ENCODE measurements at regions of chr1 and their contacts with region 1.

Region 1: GRCh38 chr1:108828022-108828961 is 28.6 kb downstream of the AKNAD1 start:
- DNase-seq: peak; percentile 60 to 64
- H3K4me3 ChIP-seq: no peak overlapping the region
- H3K27ac ChIP-seq: no peak overlapping the region
- H3K4me1 ChIP-seq: peaks cover 41% of the 10 kb centered on the region
- H3K27me3 ChIP-seq: no peaks in the 10 kb centered on the region
- CTCF ChIP-seq: peak; percentile 95

Region 2: GRCh38 chr1:108877348-108878159 is 49.3 kb after region 1 on chr1:
- CTCF ChIA-PET with region 1: no interaction called
- POLR2A ChIA-PET with region 1: no interaction called
- intact Hi-C with region 1: loop called (anchors 1 kb)
- DNase-seq: peak in 1 of 2 experiments; percentile 43
- H3K4me3 ChIP-seq: peak overlapping the region; percentile 82
- H3K27ac ChIP-seq: peak overlapping the region; percentile 31
- H3K4me1 ChIP-seq: peaks cover 44% of the 10 kb centered on the region
- H3K27me3 ChIP-seq: no peaks in the 10 kb centered on the region
- CTCF ChIP-seq: no peak

Region 3: DNA sequence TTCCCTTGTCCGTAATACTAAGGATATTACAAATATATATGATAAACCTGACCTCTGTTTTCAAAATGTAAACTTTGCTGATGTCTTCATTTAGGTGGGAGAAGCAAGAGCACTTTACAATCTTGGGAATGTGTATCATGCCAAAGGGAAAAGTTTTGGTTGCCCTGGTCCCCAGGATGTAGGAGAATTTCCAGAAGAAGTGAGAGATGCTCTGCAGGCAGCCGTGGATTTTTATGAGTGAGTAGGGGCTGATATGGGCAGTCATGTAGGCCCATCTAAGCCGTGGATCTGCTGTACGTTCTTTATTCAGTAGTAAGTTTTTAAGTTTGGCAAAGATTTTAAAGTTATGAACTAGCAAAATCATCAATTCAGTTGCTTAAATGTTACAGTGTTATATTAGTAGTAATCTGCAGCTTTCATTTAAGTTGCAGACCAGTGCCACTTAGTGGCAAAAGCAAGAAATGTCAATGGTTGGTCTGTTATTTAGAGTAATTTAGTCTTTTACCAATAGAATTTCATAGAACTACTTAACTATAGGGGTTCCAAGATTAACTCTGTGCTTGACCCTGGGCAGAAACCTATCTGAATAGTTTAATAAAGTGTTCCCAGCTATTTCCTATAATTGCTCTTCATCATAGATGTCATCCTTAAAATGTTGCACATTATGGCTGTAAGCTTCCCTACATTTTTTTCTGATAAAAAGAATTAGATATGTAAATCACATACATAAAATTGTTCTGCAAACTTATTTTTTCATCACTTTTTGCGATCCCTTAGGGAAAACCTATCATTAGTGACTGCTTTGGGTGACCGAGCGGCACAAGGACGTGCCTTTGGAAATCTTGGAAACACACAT is 69.8 kb after region 1 on chr1:
- CTCF ChIA-PET with region 1: interaction called, 8 read pairs
- POLR2A ChIA-PET with region 1: interaction called, 4 read pairs
- intact Hi-C with region 1: loop called (anchors 1 kb)
- DNase-seq: peak in 1 of 2 experiments; percentile 77
- H3K4me3 ChIP-seq: no peak overlapping the region
- H3K27ac ChIP-seq: no peak overlapping the region
- H3K4me1 ChIP-seq: no peaks in the 10 kb centered on the region
- H3K27me3 ChIP-seq: no peaks in the 10 kb centered on the region
- CTCF ChIP-seq: peak; percentile 96

Region 4: DNA sequence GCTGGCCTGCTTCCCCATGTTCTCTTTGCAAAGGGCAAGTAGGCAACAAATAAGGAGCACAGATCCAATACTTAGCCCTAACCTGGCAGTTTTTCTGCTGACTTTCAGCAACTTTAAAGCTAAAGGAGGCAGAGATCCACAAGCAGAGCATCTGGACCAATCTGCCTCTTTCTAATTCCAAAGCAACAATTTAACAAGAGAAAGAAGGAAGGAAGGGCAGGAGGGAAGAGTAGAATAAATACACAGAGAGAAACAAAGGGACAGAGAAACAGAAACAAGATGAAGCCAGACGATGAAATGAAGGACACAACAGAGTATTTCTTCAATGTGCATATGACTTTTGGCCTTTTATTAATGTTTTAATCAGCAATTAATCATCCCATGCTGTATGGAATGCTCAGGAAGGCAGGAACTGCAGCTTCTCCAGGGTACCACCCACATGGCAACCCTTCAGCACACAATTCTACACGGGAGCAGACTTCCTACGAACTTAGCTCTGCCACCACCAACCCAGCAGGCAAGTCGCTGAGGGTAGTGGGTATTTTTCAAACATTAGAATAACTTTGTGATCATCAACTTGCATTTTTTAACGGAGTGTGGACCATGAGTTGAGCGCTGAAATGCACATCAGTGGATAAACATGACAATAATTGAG is 119.7 kb after region 1 on chr1:
- CTCF ChIA-PET with region 1: no interaction called
- POLR2A ChIA-PET with region 1: no interaction called
- intact Hi-C with region 1: no loop called
- DNase-seq: no peak
- H3K4me3 ChIP-seq: no peak overlapping the region
- H3K27ac ChIP-seq: no peak overlapping the region
- H3K4me1 ChIP-seq: no peaks in the 10 kb centered on the region
- H3K27me3 ChIP-seq: no peaks in the 10 kb centered on the region
- CTCF ChIP-seq: no peak

Region 5: GRCh38 chr1:109556563-109556962 is 728.3 kb after region 1 on chr1:
- CTCF ChIA-PET with region 1: interaction called, 14 read pairs
- POLR2A ChIA-PET with region 1: no interaction called
- intact Hi-C with region 1: no loop called
- DNase-seq: no peak
- H3K4me3 ChIP-seq: no peak overlapping the region
- H3K27ac ChIP-seq: no peak overlapping the region
- H3K4me1 ChIP-seq: no peaks in the 10 kb centered on the region
- H3K27me3 ChIP-seq: no peaks in the 10 kb centered on the region
- CTCF ChIP-seq: no peak

Measured in PC-9 (cell line).